ENCODE measurements at regions of chr15 and their contacts with region 1.

Region 1: DNA sequence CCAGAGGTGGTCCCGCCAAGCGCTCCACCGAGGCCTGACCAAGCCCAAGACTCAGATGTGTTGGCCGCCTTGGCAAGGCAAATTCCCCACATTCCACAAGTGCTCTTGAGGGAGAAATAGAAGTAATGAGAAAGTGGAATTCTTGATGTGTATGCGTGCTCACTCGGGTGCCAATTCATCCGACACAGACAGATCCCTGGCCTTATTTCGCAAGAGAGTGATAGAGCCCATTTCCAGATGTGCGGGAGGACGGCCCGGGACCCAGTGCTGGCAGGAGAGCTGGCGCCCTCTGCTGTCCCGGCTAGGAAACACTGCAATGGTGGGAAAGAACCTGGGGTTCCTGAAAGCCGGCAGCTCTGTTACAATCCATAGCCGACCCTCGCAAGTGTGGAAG is 76.0 kb downstream of the HMG20A start:
- DNase-seq: peak; percentile 58 to 91 (median 78)
- ATAC-seq: peak; percentile 80 to 93 (median 86)
- H3K4me3 ChIP-seq: no peak overlapping the region
- H3K27ac ChIP-seq: peak overlapping the region; percentile 47 to 74 (median 56)
- H3K4me1 ChIP-seq: peaks cover 15 to 27% (median 21%) of the 10 kb centered on the region in 3 donors
- H3K27me3 ChIP-seq: no peaks in the 10 kb centered on the region
- CTCF ChIP-seq: peak; percentile 68 to 90 (median 82)

Region 2: GRCh38 chr15:77118882-77119321 is 377.8 kb before region 1 on chr15:
- intact Hi-C with region 1: loop called in 1 of 3 experiments (anchors 10 kb)
- DNase-seq: peak in 3 of 6 donors; percentile 41 to 60 (median 42)
- ATAC-seq: peak; percentile 77 to 94 (median 93)
- H3K4me3 ChIP-seq: no peak overlapping the region
- H3K27ac ChIP-seq: no peak overlapping the region
- H3K4me1 ChIP-seq: no peaks in the 10 kb centered on the region
- H3K27me3 ChIP-seq: no peaks in the 10 kb centered on the region
- CTCF ChIP-seq: peak; percentile 22 to 63 (median 58)

Region 3: DNA sequence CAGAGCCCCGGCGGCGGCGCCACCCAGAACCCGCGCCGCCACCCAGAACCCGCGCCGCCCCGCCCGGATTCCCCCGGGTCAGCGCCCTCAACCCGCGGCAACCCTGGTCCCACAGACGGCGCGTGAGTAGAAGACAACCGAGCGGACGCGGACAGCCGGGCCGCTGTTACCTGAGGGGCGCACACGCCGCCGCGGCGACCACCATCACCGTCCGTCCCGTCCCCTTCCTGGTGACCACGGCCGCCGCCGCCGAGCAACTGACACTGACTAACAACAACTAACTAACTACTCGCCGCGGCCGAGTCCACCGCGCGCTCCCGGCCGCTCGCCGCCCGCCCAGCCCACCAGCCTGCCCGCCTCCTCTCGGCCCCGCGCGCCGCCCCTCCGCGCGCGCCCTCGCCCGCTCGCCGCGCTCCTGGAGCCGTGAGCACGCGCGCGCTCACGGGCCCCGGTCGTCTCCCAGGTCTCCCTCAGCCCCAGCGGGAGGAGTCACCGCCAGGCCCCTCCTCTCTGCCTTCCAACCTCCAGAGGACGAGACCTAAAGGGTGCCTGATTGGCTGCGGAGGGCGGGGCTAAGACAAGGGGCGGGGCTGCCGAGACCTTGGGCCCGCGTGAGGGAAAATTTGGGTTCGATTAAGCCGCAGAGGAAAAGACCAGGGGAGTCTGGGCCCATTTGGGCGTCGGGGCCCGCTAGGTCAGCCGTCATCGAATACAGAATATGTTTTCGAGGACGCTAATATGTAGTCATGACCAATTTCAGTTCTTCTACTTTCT is 76.7 kb before region 1 on chr15 and contains the start of gene PEAK1:
- intact Hi-C with region 1: loop called in 1 of 3 experiments (anchors 10 kb)
- DNase-seq: peak; percentile 97 to 100 (median 100)
- ATAC-seq: peak; percentile 95 to 98 (median 96)
- H3K4me3 ChIP-seq: peak within 1 kb of the TSS; percentile 67 to 94 (median 82)
- H3K27ac ChIP-seq: peak within 1 kb of the TSS; percentile 82 to 96 (median 88)
- H3K4me1 ChIP-seq: peaks cover 0 to 36% (median 29%) of the 10 kb centered on the region in 3 donors
- H3K27me3 ChIP-seq: no peaks in the 10 kb centered on the region
- CTCF ChIP-seq: no peak
- total RNA-seq, gene PEAK1: 9.1 to 27.6 (median 12.5) TPM

Region 4: DNA sequence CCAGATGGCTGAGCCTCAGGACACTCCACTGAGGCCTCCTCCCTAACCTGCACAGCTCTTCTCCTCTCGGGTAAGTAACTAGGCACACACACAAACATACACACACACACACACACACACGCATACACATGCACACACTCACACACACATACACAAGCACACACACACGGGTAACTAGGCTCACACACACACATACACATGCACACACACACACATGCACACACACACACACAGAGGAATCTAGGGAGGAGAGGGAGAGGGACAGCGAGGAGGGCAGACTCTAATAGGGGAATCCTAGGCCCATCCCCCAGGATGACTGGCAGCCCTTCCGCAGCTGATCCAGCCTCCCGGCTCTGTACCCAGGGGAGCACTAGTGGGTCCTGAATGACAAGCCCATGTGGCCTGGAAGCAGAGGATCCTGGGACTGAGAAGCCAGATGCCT is 313.4 kb after region 1 on chr15:
- intact Hi-C with region 1: no loop called
- DNase-seq: no peak
- ATAC-seq: no peak
- H3K4me3 ChIP-seq: no peak overlapping the region
- H3K27ac ChIP-seq: no peak overlapping the region
- H3K4me1 ChIP-seq: no peaks in the 10 kb centered on the region
- H3K27me3 ChIP-seq: no peaks in the 10 kb centered on the region
- CTCF ChIP-seq: no peak

Measured in pancreas (tissue), 10 donors.